ENCODE measurements at regions of chr7 and their contacts with region 1.

Region 1: DNA sequence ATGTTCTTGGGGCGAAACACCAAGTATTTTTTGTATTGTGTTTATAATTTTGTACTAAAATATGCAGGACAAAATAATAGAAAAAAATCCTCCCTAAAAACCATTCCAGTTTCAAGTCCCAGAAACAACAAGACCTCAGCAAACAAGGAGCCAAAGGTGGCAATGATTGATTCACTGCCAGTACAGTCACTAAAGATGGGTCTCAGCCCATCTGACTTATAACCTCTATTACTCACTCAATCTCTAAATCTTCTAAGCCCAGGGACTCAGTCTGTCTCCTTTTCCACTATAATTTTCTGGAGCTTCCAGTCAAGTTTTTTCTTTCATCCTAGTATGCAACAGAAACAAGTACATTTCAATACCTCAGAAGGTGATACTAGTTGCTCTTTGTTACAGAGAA is 33.3 kb downstream of the SNX13 start:
- DNase-seq: no peak
- ATAC-seq: no peak
- H3K4me3 ChIP-seq: no peak overlapping the region
- H3K4me3 Mint-ChIP-seq: no peak overlapping the region
- H3K27ac ChIP-seq: no peak overlapping the region
- H3K27ac Mint-ChIP-seq: no peak overlapping the region
- H3K4me1 ChIP-seq: peaks cover 3% of the 10 kb centered on the region
- H3K4me1 Mint-ChIP-seq: peaks cover 64% of the 10 kb centered on the region
- H3K27me3 ChIP-seq: no peaks in the 10 kb centered on the region
- H3K27me3 Mint-ChIP-seq: no peaks in the 10 kb centered on the region
- CTCF ChIP-seq: no peak

Region 2: GRCh38 chr7:17921857-17922416 is 14.9 kb after region 1 on chr7:
- CTCF ChIA-PET with region 1: no interaction called
- POLR2A ChIA-PET with region 1: no interaction called
- intact Hi-C with region 1: loop called in 1 of 2 experiments (anchors 2 kb)
- DNase-seq: no peak
- ATAC-seq: no peak
- H3K4me3 ChIP-seq: no peak overlapping the region
- H3K4me3 Mint-ChIP-seq: no peak overlapping the region
- H3K27ac ChIP-seq: no peak overlapping the region
- H3K27ac Mint-ChIP-seq: no peak overlapping the region
- H3K4me1 ChIP-seq: peaks cover 19% of the 10 kb centered on the region
- H3K4me1 Mint-ChIP-seq: peaks cover 70% of the 10 kb centered on the region
- H3K27me3 ChIP-seq: no peaks in the 10 kb centered on the region
- H3K27me3 Mint-ChIP-seq: no peaks in the 10 kb centered on the region
- CTCF ChIP-seq: no peak

Measured in CD8-positive, alpha-beta T cell (primary cell).